Heart left ventricle (tissue), 16 donors: ENCODE measurements at regions of chr9 and their contacts with region 1.

Region 1: DNA sequence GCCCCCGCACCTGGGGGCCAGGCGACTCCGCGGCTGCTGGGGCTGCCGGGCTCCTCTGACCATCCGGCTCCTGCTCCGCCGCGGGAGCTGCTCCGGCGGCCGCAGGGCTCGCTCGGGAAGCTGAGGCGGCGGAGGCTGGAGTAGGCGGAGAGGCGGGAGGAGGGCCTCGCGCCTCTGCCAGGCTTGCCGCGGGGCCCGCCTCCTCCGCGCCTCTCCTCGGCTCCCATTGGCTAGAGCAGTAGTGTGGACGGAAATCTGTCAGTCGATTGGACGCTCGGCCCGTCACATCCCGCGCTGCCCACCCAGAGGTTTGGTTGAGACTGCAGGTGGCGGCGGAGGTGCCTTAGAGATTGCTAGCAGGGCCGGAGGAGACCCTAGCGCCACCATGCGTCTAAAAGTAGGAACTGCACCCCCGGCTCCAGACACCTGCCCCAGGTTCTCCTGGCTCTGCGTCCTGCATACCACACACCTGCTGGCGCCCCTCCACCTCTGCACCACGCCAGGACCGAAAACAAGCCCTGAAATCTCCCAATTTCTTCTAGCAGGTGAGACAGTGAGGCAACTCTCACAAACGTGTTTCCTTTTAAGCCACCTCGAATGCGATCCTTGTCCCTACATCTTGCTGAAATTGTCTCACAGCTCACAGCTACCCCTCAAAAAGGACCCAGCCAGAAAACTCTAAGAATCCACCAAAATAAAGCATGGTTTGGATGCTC is at the start of gene SCAI:
- DNase-seq: peak; percentile 99 to 100 (median 99)
- ATAC-seq: peak; percentile 100
- H3K4me3 ChIP-seq: peak within 1 kb of the TSS; percentile 61 to 91 (median 72)
- H3K27ac ChIP-seq: peak within 1 kb of the TSS in 9 of 12 donors; percentile 8 to 83 (median 52)
- H3K4me1 ChIP-seq: peaks cover 0 to 15% (median 7%) of the 10 kb centered on the region in 12 donors
- H3K27me3 ChIP-seq: no peaks in the 10 kb centered on the region
- CTCF ChIP-seq: peak; percentile 96 to 100 (median 99)
- POLR2A ChIP-seq: peak in 1 of 2 donors; percentile 59
- total RNA-seq, gene SCAI: 1.8 to 5.3 (median 4.0) TPM

Region 2: GRCh38 chr9:124852829-124853531 is 290.6 kb before region 1 on chr9 and contains the start of gene WDR38:
- intact Hi-C with region 1: loop called in 1 of 10 experiments (anchors 10 kb)
- DNase-seq: peak; percentile 79 to 90 (median 86)
- ATAC-seq: peak; percentile 89 to 92 (median 91)
- H3K4me3 ChIP-seq: peak within 1 kb of the TSS in 11 of 12 donors; percentile 17 to 60 (median 49)
- H3K27ac ChIP-seq: peak within 1 kb of the TSS; percentile 42 to 95 (median 86)
- H3K4me1 ChIP-seq: peaks cover 0 to 41% (median 20%) of the 10 kb centered on the region in 12 donors
- H3K27me3 ChIP-seq: no peaks in the 10 kb centered on the region
- CTCF ChIP-seq: peak; percentile 96 to 100 (median 98)
- POLR2A ChIP-seq: peak in 1 of 2 donors; percentile 23
- total RNA-seq, gene WDR38: not detected

Region 3: DNA sequence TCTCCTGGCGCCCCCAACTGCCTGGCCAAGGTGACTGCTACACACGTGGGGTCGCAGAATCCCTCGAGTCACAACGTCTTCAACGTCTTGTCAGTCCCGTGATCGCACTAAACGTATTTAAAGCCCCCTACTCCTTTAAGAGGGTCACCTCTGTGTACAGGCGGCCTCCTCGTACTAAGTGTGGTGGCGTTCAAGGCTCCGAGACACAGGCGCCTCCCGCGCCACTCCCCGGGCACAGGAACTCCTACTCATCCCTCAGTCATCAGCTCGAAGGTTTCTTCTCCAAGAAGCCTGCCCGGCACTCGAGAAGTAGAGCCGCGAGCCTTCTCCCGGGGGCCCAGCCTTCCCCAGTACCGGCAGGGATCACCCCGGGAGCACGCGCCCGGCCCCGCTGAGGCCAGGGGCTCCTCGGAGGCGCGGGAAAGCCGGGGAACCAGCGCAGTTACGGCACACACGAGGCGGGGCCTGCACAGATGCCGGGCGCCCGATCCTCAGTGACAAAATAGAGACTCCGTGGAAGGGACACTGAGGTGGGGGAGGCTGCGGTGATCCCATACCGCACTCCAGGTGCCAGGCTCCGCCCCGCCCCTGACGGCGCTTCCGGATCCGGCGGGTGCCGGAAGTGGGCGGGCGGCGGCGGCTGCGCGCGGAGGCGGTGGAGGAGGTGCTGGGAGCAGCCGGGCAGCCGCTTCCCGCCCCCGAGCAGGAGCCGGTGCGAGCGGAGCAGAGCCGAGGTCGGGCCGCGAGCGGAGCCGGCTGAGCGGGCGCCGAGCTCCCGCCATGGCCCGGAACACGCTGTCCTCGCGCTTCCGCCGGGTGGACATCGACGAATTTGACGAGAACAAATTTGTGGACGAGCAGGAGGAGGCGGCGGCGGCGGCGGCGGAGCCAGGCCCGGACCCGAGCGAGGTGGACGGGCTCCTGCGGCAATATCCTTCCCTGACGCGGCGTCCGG is 274.7 kb before region 1 on chr9:
- intact Hi-C with region 1: loop called in 5 of 10 experiments (anchors 5 to 10 kb)
- DNase-seq: peak; percentile 90 to 94 (median 91)
- ATAC-seq: peak; percentile 73 to 93 (median 90)
- H3K4me3 ChIP-seq: peak overlapping the region; percentile 69 to 99 (median 88)
- H3K27ac ChIP-seq: peak overlapping the region; percentile 70 to 98 (median 94)
- H3K4me1 ChIP-seq: peaks cover 17 to 53% (median 47%) of the 10 kb centered on the region in 12 donors
- H3K27me3 ChIP-seq: no peaks in the 10 kb centered on the region
- CTCF ChIP-seq: peak in 2 of 12 donors; percentile 3 to 10
- POLR2A ChIP-seq: peak; percentile 81 to 91

Region 4: DNA sequence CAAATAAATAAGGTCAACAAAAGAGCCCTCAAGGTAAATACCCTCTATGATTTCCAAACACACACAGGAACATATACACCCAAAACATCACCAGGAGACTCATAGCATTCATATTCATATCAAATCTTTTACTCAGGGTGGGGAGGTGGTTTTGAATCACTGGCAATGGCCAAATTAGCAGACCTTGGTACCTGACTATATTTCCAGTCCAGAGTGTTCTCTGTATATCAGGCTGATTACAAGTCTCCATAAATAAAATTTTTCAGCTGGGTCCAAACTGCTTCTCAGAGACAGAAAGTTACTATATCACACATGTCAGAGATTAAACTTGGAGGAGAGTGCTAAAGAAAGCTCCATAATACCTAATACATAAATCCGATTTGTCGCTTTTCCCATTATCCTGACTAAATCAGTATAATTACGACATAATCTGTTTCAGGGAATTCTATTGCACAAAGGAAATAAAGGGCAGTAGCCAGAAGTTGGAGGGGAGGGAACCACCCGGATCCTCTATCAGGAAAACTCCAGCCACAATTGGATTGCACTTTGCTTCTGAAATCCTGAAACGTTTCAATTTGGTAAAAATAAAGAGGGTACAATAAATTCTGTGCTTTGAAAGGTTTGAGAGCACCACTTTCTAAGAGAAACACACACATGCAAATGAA is 195.7 kb before region 1 on chr9:
- intact Hi-C with region 1: loop called in 5 of 10 experiments (anchors 5 to 10 kb)
- DNase-seq: no peak
- ATAC-seq: no peak
- H3K4me3 ChIP-seq: no peak overlapping the region
- H3K27ac ChIP-seq: no peak overlapping the region
- H3K4me1 ChIP-seq: no peaks in the 10 kb centered on the region
- H3K27me3 ChIP-seq: no peaks in the 10 kb centered on the region
- CTCF ChIP-seq: no peak
- POLR2A ChIP-seq: no peak

Region 5: DNA sequence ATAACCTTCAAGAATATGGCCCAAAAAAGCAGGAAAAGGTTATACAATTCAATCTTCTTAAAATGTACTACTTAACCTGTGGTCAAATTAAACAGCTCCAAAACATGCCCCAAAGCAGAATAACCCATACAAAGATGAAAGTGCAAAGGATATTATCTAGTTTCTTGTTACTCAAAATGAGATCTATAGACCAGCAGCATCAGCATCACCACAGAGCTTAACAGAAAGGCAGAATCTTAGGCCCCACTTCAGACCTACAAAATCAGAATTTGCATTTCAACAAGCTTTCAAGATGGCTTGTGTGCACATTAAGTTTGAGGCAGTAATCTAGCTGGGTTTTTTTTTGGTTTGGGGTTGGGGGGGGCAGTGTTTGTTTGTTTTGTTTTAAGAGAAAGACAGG is 54.2 kb before region 1 on chr9:
- intact Hi-C with region 1: no loop called
- DNase-seq: no peak
- ATAC-seq: no peak
- H3K4me3 ChIP-seq: no peak overlapping the region
- H3K27ac ChIP-seq: no peak overlapping the region
- H3K4me1 ChIP-seq: peaks cover 0 to 13% (median 0%) of the 10 kb centered on the region in 12 donors
- H3K27me3 ChIP-seq: no peaks in the 10 kb centered on the region
- CTCF ChIP-seq: no peak
- POLR2A ChIP-seq: no peak

Region 6: DNA sequence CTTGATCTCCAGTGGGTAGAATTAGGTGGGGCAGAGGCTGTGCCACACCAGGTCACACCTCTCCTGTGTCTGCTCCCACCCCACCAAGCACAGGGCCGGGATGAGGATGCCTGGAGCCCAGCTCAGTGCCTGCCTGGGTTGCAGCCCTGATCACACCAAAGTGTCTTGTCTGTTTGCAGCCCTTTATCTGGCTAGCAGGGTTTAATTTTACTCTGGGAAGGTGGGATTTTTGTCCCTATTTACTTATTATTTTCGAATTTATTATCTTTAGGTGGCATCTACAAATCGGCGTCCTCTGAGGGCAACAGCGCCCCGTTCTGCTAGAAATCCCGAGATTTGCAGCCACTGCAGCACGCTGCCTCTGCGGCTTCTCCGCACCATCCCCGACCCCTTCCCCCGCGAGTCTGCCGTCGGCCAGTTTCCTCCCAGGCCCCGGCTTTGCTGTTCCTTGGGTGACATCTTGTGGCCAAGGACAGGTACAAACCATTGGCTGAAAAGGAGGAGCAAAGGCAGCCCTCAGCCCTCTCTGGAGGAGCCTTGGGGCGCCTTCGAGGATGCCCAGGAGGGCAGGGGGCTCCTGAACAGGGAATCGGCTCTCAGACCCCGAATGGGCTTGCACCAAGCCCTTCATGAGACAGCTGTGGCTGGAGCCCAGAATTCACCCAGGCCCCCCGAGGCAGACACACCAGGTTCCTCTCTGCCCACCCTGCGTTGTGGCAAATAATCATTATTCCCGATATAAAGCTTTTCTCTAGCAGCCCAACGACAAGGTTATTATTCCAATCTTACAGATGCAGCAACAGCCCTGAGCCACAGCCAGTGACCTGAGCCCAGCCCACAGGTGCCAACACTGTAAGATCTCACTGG is 231.1 kb after region 1 on chr9:
- intact Hi-C with region 1: loop called in 1 of 10 experiments (anchors 10 kb)
- DNase-seq: peak; percentile 55 to 76 (median 66)
- ATAC-seq: peak; percentile 70 to 87 (median 84)
- H3K4me3 ChIP-seq: peak overlapping the region in 9 of 12 donors; percentile 26 to 50 (median 42)
- H3K27ac ChIP-seq: no peak overlapping the region
- H3K4me1 ChIP-seq: peaks cover 0 to 8% (median 2%) of the 10 kb centered on the region in 12 donors
- H3K27me3 ChIP-seq: peaks cover 0 to 4% (median 0%) of the 10 kb centered on the region in 9 donors
- CTCF ChIP-seq: peak; percentile 57 to 81 (median 70)
- POLR2A ChIP-seq: no peak